ENCODE measurements at regions of chr14 and their contacts with region 1.

Region 1: DNA sequence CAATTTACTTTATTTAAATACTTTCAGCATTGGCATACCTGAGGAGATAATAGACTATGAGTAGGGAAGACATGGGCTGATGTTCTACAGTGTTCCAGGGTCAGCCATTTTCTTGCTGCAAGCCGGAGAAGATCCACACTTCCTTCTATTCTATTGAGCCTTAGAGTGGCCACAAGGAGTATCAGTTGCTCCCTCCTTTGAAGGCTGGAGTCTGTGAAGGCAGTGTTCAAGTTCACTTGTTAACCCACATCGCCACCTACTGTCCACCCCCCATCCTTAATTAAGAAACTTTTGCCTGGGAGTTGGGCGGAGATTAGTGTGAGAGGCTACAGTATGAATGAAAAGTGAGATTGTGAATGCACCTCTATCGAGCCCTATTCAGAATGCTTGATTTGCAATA is 666.6 kb downstream of the NRXN3 start:
- DNase-seq: peak in 1 of 3 donors; percentile 75
- ATAC-seq: peak; percentile 71
- H3K4me3 ChIP-seq: no peak overlapping the region
- H3K4me1 ChIP-seq: no peaks in the 10 kb centered on the region
- CTCF ChIP-seq: peak; percentile 28

Region 2: DNA sequence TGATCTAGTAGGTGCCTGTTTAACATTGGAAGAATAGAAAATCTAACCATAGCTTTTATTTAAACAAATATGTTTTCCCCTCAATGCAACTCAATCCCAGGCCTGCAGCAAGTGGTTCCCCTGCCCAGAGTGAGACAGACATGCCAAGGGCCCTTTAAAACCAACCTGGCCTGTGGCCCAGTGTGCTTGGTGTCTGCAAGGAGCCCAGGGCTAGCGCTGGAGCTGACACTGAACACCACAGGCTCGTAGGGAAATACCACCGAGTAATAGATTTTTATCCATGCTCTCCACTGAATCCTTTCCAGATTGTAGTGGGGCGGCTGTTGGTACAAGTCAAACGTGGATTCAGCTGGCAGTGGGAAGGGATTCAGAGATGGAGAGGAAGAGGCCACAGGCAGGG is 762.2 kb before region 1 on chr14:
- intact Hi-C with region 1: loop called in 1 of 2 experiments (anchors 5 kb)
- DNase-seq: no peak
- ATAC-seq: no peak
- H3K4me3 ChIP-seq: no peak overlapping the region
- H3K4me1 ChIP-seq: no peaks in the 10 kb centered on the region
- CTCF ChIP-seq: no peak

Region 3: GRCh38 chr14:80172375-80173051 is 1335.7 kb after region 1 on chr14:
- intact Hi-C with region 1: no loop called
- DNase-seq: no peak
- ATAC-seq: no peak
- H3K4me3 ChIP-seq: no peak overlapping the region
- H3K4me1 ChIP-seq: no peaks in the 10 kb centered on the region
- CTCF ChIP-seq: no peak